MCF 10A (cell line): ENCODE measurements at regions of chr17 and their contacts with region 1.

Region 1: DNA sequence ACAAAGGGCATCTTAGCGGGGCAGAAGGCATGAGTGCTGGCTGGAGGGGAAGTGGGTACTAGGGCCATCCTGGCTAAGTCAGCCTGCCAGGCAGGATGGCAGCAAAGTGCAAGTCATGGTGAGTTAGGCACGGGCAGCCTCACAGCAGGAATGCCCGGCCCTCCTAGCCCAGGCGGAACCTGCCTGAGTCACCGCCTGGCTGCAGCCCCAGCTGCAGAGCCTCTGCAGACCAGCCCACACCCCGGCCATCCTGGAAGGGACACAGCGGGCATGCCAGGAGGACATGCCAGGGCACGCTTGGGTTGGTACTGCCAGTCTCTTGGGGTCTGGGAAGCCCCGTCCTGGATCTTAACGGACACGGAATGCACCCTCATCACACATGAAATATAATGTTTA is 4.9 kb upstream of the ALDH3A1 start:
- DNase-seq: peak; percentile 97
- H3K4me3 Mint-ChIP-seq: peak overlapping the region; percentile 9
- H3K27ac Mint-ChIP-seq: peak overlapping the region; percentile 79
- H3K4me1 Mint-ChIP-seq: peaks cover 56% of the 10 kb centered on the region
- H3K27me3 Mint-ChIP-seq: no peaks in the 10 kb centered on the region
- CTCF ChIP-seq: no peak

Region 2: DNA sequence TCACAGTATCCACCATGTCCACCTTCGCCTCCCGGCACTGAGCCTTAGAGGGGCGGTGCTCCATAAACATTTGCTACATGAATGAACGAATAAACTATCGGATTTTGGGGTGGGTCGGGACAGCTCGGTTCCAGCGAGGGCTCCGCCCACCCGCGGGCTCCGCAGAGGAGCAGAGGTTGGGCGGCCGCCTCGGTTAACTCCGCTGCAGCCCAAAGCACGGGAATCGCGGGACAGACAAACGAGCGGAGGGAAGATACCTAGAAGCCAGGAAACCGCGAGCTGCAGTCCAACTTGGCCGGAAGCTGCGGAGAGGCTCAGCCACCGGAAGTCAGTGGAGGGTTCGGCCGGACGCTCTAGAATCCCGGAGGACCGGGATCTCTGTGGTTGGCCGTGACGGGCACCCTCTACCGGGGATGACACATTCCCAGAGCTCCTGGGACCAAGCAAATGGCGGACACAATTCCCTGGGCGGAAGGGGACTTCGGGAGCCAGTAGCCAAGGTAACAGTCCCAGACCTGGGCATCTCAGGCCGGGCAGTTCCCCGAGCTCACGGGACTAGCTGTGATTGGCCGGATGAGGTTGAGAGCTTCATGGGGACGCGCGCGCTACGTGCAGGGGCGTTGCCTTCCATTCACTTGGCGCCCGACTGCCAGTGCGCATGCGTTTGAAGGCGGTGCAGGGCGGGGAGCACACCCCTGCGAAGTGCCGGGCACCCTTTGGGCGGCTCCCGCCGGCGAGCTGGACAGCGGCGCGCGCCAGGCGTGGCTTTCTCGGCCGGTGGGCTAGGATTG is 375.2 kb before region 1 on chr17:
- CTCF ChIA-PET with region 1: interaction called, 3 read pairs
- POLR2A ChIA-PET with region 1: interaction called, 6 read pairs
- intact Hi-C with region 1: loop called (anchors 5 kb)
- DNase-seq: peak; percentile 98
- H3K4me3 Mint-ChIP-seq: peak overlapping the region; percentile 94
- H3K27ac Mint-ChIP-seq: peak overlapping the region; percentile 99
- H3K4me1 Mint-ChIP-seq: peaks cover 16% of the 10 kb centered on the region
- H3K27me3 Mint-ChIP-seq: no peaks in the 10 kb centered on the region
- CTCF ChIP-seq: no peak

Region 3: GRCh38 chr17:19513897-19514488 is 239.1 kb before region 1 on chr17:
- CTCF ChIA-PET with region 1: interaction called, 46 read pairs
- POLR2A ChIA-PET with region 1: interaction called, 4 read pairs
- intact Hi-C with region 1: no loop called
- DNase-seq: peak; percentile 76
- H3K4me3 Mint-ChIP-seq: no peak overlapping the region
- H3K27ac Mint-ChIP-seq: no peak overlapping the region
- H3K4me1 Mint-ChIP-seq: no peaks in the 10 kb centered on the region
- H3K27me3 Mint-ChIP-seq: no peaks in the 10 kb centered on the region
- CTCF ChIP-seq: peak; percentile 82

Region 4: DNA sequence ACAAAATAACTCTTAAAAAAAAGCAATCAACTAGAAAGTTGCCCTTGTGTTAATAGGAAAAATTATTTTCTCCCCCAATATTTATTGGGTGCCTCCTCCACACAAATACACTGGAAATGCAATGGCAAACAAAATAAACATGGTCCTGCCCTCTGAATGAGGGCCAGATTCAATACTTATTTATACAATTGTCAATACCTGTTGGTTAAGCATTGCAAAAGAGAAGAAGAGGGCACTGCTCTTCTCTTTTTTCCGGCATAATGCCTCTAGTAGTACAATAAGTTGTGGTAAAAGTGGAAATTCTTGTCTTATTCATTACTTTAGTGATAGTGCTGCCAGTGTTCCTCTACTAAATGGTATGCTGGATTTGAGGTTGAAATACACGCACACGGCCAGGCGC is 127.0 kb before region 1 on chr17:
- CTCF ChIA-PET with region 1: no interaction called
- POLR2A ChIA-PET with region 1: no interaction called
- intact Hi-C with region 1: no loop called
- DNase-seq: no peak
- H3K4me3 Mint-ChIP-seq: no peak overlapping the region
- H3K27ac Mint-ChIP-seq: no peak overlapping the region
- H3K4me1 Mint-ChIP-seq: peaks cover 11% of the 10 kb centered on the region
- H3K27me3 Mint-ChIP-seq: no peaks in the 10 kb centered on the region
- CTCF ChIP-seq: no peak

Region 5: DNA sequence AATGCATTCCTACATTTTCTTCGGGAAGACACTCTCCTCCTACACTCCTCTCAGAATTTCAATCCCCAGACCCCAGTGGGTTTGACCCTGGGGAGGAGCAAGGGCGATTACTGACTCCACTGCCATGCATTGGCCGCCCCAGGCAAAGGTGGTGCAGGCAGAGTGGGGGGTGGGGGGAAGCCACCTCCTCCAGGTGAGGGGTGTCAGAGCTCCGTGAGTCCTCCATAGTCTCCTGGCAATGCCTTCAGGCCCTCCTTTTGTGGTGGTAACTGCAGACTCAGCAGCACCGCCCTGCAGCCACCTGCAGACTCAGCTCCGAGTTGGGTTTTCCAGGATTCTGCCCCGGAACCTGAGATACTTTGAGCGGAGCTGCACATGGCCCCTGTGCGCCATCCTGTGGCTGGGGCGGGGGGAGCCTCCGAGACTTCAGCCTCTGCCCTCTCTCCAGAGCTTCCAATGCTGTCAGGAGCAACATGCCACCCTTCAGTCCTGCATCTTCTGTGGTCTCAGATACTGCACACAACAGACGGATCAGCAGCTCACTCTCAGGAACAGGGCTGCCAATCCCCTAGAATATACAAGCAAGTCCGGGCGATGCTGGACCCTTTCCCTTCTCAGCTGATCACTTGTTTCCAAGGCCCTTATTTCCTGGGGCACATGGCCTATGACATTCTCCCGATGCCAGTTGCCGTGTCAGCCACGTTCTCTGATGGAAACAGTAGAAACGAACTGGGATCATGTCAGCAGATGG is 34.3 kb before region 1 on chr17:
- CTCF ChIA-PET with region 1: interaction called, 40 read pairs
- POLR2A ChIA-PET with region 1: interaction called, 311 read pairs
- intact Hi-C with region 1: loop called (anchors 1 kb)
- DNase-seq: peak; percentile 69
- H3K4me3 Mint-ChIP-seq: peak overlapping the region; percentile 26
- H3K27ac Mint-ChIP-seq: peak overlapping the region; percentile 29
- H3K4me1 Mint-ChIP-seq: peaks cover 40% of the 10 kb centered on the region
- H3K27me3 Mint-ChIP-seq: no peaks in the 10 kb centered on the region
- CTCF ChIP-seq: peak; percentile 62

Region 6: GRCh38 chr17:19766422-19767270 is 13.6 kb after region 1 on chr17:
- CTCF ChIA-PET with region 1: interaction called, 41 read pairs
- POLR2A ChIA-PET with region 1: interaction called, 14 read pairs
- intact Hi-C with region 1: no loop called
- DNase-seq: peak; percentile 74
- H3K4me3 Mint-ChIP-seq: no peak overlapping the region
- H3K27ac Mint-ChIP-seq: no peak overlapping the region
- H3K4me1 Mint-ChIP-seq: peaks cover 5% of the 10 kb centered on the region
- H3K27me3 Mint-ChIP-seq: no peaks in the 10 kb centered on the region
- CTCF ChIP-seq: peak; percentile 99